Stomach (tissue), 19 donors: ENCODE measurements at regions of chr1 and their contacts with region 1.

Region 1: GRCh38 chr1:46309401-46310159 is 6.1 kb downstream of the UQCRH start:
- DNase-seq: no peak
- H3K4me3 ChIP-seq: no peak overlapping the region
- H3K27ac ChIP-seq: no peak overlapping the region
- H3K4me1 ChIP-seq: peaks cover 9 to 46% (median 27%) of the 10 kb centered on the region in 4 donors
- H3K27me3 ChIP-seq: no peaks in the 10 kb centered on the region
- CTCF ChIP-seq: no peak
- EP300 ChIP-seq: no peak
- POLR2A ChIP-seq: no peak

Region 2: DNA sequence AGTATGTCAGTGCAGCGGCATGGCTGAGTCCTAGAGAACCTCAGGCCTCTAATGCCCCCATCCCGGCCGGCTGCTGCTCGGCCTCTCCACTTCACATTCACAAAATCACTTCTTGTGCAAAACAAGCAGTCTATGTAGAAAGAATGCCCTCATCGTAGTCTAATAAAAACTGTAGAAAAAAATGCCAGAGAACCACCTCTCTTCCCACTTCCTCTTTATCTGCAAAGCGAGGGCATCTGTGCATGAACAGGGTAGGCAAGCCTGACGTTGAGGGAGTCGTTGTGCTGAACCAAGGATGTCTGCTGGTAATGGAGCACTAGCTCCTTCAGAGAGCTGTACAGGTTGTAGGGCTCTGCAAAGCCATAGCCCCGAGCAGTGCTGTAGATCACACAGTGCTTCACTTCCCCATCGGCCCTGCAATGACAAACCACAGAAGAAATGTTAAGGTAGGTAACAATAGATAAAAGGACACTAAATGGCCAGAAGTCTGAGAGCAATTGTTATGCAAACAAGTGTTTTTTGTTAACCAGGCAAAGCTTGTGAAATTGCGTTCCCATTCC is 266.0 kb before region 1 on chr1:
- intact Hi-C with region 1: no loop called
- DNase-seq: no peak
- H3K4me3 ChIP-seq: no peak overlapping the region
- H3K27ac ChIP-seq: no peak overlapping the region
- H3K4me1 ChIP-seq: peaks cover 0 to 38% (median 14%) of the 10 kb centered on the region in 4 donors
- H3K27me3 ChIP-seq: no peaks in the 10 kb centered on the region
- CTCF ChIP-seq: no peak
- EP300 ChIP-seq: no peak
- POLR2A ChIP-seq: no peak

Region 3: GRCh38 chr1:46340404-46341221 is 31.0 kb after region 1 on chr1 and contains the start of gene NSUN4:
- intact Hi-C with region 1: loop called (anchors 5 kb)
- DNase-seq: peak; percentile 93 to 98
- H3K4me3 ChIP-seq: peak within 1 kb of the TSS; percentile 64 to 79 (median 68)
- H3K27ac ChIP-seq: peak within 1 kb of the TSS; percentile 92 to 99 (median 99)
- H3K4me1 ChIP-seq: peaks cover 6 to 24% (median 14%) of the 10 kb centered on the region in 4 donors
- H3K27me3 ChIP-seq: no peaks in the 10 kb centered on the region
- CTCF ChIP-seq: peak in 4 of 7 experiments; percentile 39 to 82 (median 58)
- EP300 ChIP-seq: peak; percentile 94
- POLR2A ChIP-seq: peak in 2 of 4 donors; percentile 41 to 80
- total RNA-seq, gene NSUN4: 1.2 to 56.7 (median 15.4) TPM

Region 4: DNA sequence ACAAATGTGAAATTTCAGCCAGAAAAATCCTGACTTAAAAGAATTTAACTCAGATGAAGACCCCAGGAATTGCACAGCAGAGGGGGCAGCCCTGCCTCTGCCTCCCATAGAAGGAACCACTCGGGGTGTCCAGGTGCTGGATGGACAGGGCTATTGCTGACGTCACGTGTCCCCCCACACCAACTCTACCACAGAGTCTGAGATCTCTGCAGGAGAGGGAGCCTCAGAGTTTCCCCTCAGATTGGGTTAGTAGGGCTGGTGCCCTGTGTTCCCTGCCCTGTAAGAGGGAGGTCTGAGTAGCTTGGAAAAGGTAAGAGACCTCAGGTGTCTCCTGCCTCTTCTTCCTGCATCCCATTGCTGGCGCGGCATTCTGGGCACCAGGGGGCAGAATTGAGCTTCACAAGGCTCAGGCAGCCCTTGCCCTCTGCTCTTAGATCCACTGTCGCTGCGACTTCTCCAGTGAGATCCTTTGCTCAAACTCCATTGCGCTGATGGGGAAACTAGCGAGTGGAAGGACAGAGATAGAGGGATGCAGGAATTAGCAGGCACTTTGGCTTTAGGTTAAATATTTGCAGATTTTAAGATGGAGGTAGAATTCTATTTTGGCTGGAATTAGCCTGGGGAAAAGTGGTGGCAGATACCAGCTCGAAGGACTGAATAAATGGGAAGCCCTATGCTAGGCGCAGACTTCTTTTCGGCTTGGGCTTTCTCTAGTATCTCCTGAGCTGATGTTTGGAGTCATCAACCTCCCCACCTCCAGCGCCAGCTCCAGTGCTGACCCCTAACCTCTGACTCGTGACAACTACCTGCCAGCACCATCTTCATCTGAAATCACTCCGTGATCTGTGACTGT is 137.3 kb after region 1 on chr1:
- intact Hi-C with region 1: no loop called
- DNase-seq: peak; percentile 88 to 91
- H3K4me3 ChIP-seq: no peak overlapping the region
- H3K27ac ChIP-seq: no peak overlapping the region
- H3K4me1 ChIP-seq: peaks cover 15 to 24% (median 21%) of the 10 kb centered on the region in 4 donors
- H3K27me3 ChIP-seq: peaks cover 9 to 66% (median 34%) of the 10 kb centered on the region in 3 donors
- CTCF ChIP-seq: peak in 5 of 7 experiments; percentile 54 to 82 (median 73)
- EP300 ChIP-seq: no peak
- POLR2A ChIP-seq: no peak